ENCODE measurements at regions of chr21 and their contacts with region 1.

Region 1: GRCh38 chr21:37145635-37146111 is 72.6 kb downstream of the TTC3 start:
- DNase-seq: no peak
- ATAC-seq: no peak
- H3K4me3 ChIP-seq: no peak overlapping the region
- H3K27ac ChIP-seq: peak overlapping the region; percentile 30
- H3K4me1 ChIP-seq: no peaks in the 10 kb centered on the region
- H3K27me3 ChIP-seq: no peaks in the 10 kb centered on the region
- CTCF ChIP-seq: no peak

Region 2: GRCh38 chr21:37319551-37319950 is 173.9 kb after region 1 on chr21:
- intact Hi-C with region 1: no loop called
- DNase-seq: no peak
- ATAC-seq: no peak
- H3K4me3 ChIP-seq: no peak overlapping the region
- H3K27ac ChIP-seq: no peak overlapping the region
- H3K4me1 ChIP-seq: no peaks in the 10 kb centered on the region
- H3K27me3 ChIP-seq: no peaks in the 10 kb centered on the region
- CTCF ChIP-seq: no peak

Region 3: DNA sequence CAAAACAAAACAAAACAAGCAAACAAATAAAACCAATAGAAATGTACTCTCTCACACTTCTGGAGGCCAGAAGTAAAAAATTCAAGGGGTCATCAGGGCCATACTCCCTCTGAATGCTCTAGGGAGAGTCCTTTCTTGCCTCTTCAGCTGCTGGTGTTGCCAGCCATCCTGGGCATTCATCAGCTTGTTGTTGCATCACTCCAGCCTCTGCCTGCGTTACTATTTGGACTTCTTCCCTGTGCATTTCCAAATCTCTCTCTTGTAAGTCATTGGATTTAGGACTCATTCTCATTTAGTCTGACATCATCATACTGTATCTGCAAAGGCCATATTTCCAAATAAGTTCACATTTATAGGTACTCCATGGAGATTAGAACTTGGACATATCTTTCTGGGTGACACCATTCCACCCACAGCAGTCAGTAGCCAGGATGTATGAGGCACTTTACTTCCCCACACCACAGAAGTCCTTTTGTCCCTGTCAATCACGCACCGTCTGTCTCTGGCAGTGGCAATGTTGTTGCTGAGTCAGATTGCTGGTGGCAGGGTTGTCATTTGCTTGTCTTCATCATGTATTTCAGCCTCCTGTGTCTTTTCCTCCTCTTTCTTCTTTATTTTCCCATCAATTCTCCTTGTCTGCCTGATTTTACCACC is 921.5 kb after region 1 on chr21:
- intact Hi-C with region 1: loop called in 1 of 2 experiments (anchors 5 kb)
- DNase-seq: peak in 1 of 2 donors; percentile 21
- ATAC-seq: peak; percentile 94 to 98 (median 97)
- H3K4me3 ChIP-seq: no peak overlapping the region
- H3K27ac ChIP-seq: peak overlapping the region; percentile 50
- H3K4me1 ChIP-seq: no peaks in the 10 kb centered on the region
- H3K27me3 ChIP-seq: no peaks in the 10 kb centered on the region
- CTCF ChIP-seq: no peak

Measured in psoas muscle (tissue), 8 donors.